ENCODE measurements at regions of chr17 and their contacts with region 1.

Region 1: GRCh38 chr17:10041916-10042588 is 137.0 kb upstream of the RCVRN start:
- DNase-seq: peak in 1 of 7 donors; percentile 34
- H3K4me3 ChIP-seq: no peak overlapping the region
- H3K27ac ChIP-seq: peak overlapping the region in 1 of 5 donors; percentile 58
- H3K4me1 ChIP-seq: no peaks in the 10 kb centered on the region
- H3K27me3 ChIP-seq: no peaks in the 10 kb centered on the region
- CTCF ChIP-seq: no peak
- POLR2A ChIP-seq: no peak

Region 2: DNA sequence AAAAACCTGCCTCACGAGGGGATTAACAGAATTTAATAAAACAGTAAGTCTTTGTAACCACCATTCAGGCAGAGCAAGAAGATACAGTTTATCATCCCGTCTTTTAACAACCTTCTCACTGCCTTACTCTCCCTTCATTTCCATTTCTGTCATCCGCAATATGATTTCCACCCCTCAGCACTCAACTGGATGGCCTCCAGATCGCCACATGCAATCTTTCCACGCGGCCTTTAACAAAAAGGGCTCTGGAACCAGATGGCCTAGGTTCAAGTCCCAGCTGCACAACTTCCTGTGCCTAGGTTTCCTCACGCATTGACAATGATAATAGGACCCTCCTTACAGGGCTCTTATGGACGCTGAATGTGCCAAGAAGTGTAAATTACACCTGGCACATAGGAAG is 52.7 kb after region 1 on chr17:
- intact Hi-C with region 1: loop called in 1 of 2 experiments (anchors 5 kb)
- DNase-seq: peak in 2 of 7 donors; percentile 35 to 36
- H3K4me3 ChIP-seq: no peak overlapping the region
- H3K27ac ChIP-seq: peak overlapping the region in 1 of 5 donors; percentile 51
- H3K4me1 ChIP-seq: peaks cover 0 to 3% of the 10 kb centered on the region in 2 donors
- H3K27me3 ChIP-seq: no peaks in the 10 kb centered on the region
- CTCF ChIP-seq: no peak
- POLR2A ChIP-seq: no peak

Region 3: DNA sequence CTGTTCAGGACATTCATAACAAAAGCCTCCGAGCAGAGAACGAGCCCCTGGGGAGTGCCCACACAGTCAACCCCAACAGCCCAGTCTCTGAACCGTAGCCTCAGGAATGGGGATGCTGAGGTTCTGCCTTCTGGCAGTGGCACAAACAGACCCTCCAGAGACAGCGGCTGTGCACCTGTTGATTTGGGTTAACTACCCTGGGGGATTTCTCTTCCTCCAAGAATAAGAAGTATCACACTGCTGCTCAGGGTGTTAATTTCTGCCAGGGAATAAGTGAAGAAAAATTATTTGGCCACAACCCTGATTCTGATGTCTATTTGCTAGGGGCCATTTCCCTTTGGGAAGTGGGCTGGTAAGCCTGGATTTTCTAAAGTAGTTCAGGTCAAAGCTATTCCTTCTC is 846.8 kb after region 1 on chr17:
- intact Hi-C with region 1: no loop called
- DNase-seq: no peak
- H3K4me3 ChIP-seq: no peak overlapping the region
- H3K27ac ChIP-seq: no peak overlapping the region
- H3K4me1 ChIP-seq: no peaks in the 10 kb centered on the region
- H3K27me3 ChIP-seq: no peaks in the 10 kb centered on the region
- CTCF ChIP-seq: no peak
- POLR2A ChIP-seq: no peak